GM23248 (cell line): ENCODE measurements at regions of chr4 and their contacts with region 1.

Region 1: DNA sequence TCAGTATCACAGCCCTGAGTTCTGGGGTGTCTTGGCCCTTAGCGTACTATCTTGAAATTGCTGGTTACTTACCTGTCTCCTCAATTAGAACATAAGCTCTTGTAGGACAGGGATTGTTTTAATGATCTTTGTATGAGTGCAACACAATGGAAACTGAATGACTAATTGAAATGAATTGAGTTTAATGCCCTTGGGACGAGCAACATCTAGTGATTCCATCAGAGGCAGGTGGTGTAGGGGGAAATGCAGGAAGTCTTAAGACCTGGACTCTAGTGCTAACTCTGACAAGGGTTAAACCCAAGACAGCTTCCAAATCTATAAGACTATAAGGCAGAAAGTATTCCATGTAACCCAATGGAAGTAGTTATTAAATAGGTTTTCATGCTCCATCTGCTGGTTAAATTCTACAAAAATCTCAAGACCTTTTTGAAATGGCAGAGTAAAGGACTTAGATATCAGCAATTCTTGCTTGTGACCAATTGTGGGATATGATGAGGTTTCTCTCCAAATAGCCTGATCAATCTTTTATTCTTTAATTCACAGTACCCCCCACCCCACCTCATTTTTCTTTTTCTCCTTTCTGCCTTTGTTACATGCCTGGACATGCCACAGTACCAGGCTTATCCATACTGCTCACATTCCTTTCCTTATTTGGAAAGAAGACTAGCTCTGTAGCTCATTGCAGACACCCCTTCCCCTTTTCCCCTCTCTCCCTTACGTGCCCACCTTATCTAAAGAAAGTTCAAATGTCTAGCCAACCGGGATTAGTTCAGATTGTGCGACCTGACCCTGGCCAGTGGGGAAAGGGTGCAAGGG is 340.8 kb downstream of the PAPSS1 start:
- DNase-seq: peak; percentile 48
- H3K4me3 ChIP-seq: no peak overlapping the region
- H3K27ac ChIP-seq: no peak overlapping the region
- H3K4me1 ChIP-seq: peaks cover 8% of the 10 kb centered on the region; the same call in 1 of the 2 replicates
- H3K27me3 ChIP-seq: no peaks in the 10 kb centered on the region

Region 2: DNA sequence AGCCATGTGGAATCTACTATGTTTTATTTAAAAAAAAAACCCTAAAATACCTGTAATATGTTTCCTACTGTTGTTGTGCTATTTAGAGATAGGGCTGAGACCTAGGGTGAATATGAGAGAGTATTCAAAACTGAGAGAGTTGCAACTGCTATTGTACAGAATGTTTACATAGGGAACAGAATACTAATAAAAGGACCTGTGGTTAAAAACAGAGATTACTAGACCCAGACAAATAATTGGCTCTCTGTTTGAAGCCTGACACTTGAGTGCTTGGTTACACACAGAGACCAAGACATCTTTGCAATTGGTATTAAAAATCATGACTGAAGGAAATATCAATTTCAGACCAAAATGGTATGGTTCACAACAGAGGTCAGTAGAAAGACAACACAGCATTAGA is 731.8 kb before region 1 on chr4:
- in situ Hi-C with region 1: no loop called
- DNase-seq: no peak
- H3K4me3 ChIP-seq: no peak overlapping the region
- H3K27ac ChIP-seq: no peak overlapping the region
- H3K4me1 ChIP-seq: peaks cover 6% of the 10 kb centered on the region
- H3K27me3 ChIP-seq: no peaks in the 10 kb centered on the region

Region 3: GRCh38 chr4:107666134-107666533 is 286.9 kb after region 1 on chr4:
- in situ Hi-C with region 1: loop called (anchors 25 kb)
- DNase-seq: peak; percentile 65
- H3K4me3 ChIP-seq: no peak overlapping the region
- H3K27ac ChIP-seq: no peak overlapping the region
- H3K4me1 ChIP-seq: peaks cover 20% of the 10 kb centered on the region
- H3K27me3 ChIP-seq: no peaks in the 10 kb centered on the region